ENCODE measurements at regions of chr11 and their contacts with region 1.

Region 1: GRCh38 chr11:1572197-1573076 is at the start of gene DUSP8:
- DNase-seq: peak; percentile 96
- ATAC-seq: peak; percentile 64
- H3K4me3 Mint-ChIP-seq: peak within 1 kb of the TSS; percentile 51
- H3K27ac Mint-ChIP-seq: no peak within 1 kb of the TSS
- H3K4me1 Mint-ChIP-seq: peaks cover 9% of the 10 kb centered on the region
- H3K27me3 Mint-ChIP-seq: peaks cover 2% of the 10 kb centered on the region
- total RNA-seq, gene DUSP8: 1.3 to 2.8 TPM

Region 2: GRCh38 chr11:842370-843002 is 730.0 kb before region 1 on chr11 and contains the starts of genes POLR2L and TSPAN4:
- CTCF ChIA-PET with region 1: no interaction called
- POLR2A ChIA-PET with region 1: no interaction called
- intact Hi-C with region 1: loop called in 1 of 2 experiments (anchors 1 kb)
- DNase-seq: peak; percentile 94
- ATAC-seq: peak; percentile 80
- H3K4me3 Mint-ChIP-seq: peak within 1 kb of the TSS; percentile 84
- H3K27ac Mint-ChIP-seq: peak within 1 kb of the TSS; percentile 87
- H3K4me1 Mint-ChIP-seq: peaks cover 22% of the 10 kb centered on the region
- H3K27me3 Mint-ChIP-seq: peaks cover 4% of the 10 kb centered on the region
- total RNA-seq, gene POLR2L: 74.6 to 79.4 TPM
- total RNA-seq, gene TSPAN4: 5.2 to 6.0 TPM

Region 3: DNA sequence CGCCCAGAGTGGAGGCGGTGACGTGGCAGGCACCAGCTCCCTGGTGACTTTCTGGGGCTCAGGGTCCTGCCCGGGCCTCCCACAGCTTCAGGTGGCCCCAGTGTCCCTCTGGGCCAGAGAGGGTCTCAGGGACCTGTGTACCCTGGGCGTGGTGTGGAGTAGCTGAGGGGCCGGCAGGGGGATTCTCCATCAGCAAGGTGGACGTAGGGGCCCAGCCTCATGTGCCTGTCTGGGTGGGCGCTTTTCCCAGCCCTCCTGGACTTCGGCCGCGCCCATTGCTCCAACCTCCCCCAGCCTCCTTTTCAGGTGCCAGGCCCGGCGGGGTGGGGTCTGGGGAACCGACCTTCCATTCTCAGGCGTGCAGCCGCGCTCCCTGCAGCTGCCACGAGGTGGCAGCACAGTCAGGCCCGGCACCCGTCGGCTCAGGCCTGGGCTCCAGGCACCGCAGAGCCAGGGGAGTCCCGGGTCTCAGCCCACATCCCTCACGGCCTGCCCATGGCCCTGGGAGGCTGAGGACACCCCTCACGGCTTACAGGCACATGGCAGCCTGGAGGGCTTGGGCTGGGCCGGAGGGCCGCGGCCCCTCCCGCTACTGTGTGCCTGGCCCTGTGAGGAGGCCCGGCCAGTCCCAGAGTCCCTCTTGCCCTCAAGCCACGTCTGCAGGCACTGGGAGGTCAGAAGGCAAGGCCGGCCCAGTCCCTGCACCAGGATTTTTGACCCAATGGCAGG is 369.5 kb before region 1 on chr11:
- CTCF ChIA-PET with region 1: interaction called, 3 read pairs
- POLR2A ChIA-PET with region 1: no interaction called
- intact Hi-C with region 1: loop called (anchors 1 to 2 kb)
- DNase-seq: peak; percentile 82
- ATAC-seq: peak; percentile 85
- H3K4me3 Mint-ChIP-seq: no peak overlapping the region
- H3K27ac Mint-ChIP-seq: no peak overlapping the region
- H3K4me1 Mint-ChIP-seq: no peaks in the 10 kb centered on the region
- H3K27me3 Mint-ChIP-seq: no peaks in the 10 kb centered on the region

Region 4: DNA sequence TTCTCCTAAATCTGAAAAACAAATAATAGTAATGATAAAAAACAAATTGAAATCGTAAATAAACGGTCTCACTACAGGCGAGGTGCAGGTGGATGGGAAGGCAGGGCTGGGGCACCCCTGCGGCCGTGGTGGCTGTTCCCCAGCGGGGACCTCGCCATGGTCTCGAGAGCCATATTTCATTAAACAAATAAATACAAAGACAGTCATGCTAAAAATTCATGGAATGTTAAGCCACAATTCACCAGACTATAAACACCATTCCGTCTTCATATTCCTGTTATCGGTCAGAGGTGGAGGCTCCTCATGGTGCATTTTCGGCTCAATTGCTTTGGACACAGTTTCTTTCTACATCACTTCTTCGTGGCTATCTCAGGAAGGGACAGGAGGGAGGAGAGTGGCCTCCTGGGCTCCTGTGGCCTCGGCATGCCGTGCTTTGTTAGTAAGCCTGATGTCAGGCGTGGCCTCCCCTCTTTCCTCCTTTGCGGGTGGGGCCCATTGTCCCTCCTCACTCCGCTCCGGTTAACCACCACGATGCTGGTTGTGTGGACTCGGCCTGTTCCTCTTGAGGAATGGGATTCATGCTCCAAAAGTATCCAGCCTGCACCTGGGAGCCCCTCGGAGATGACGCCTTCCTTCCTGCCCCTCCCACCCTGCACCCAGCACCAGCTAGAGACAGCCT is 198.8 kb before region 1 on chr11:
- CTCF ChIA-PET with region 1: no interaction called
- POLR2A ChIA-PET with region 1: no interaction called
- intact Hi-C with region 1: no loop called
- DNase-seq: no peak
- ATAC-seq: no peak
- H3K4me3 Mint-ChIP-seq: no peak overlapping the region
- H3K27ac Mint-ChIP-seq: no peak overlapping the region
- H3K4me1 Mint-ChIP-seq: no peaks in the 10 kb centered on the region
- H3K27me3 Mint-ChIP-seq: no peaks in the 10 kb centered on the region

Region 5: GRCh38 chr11:1389103-1389931 is 183.1 kb before region 1 on chr11:
- CTCF ChIA-PET with region 1: interaction called, 3 read pairs
- POLR2A ChIA-PET with region 1: no interaction called
- intact Hi-C with region 1: loop called in 1 of 2 experiments (anchors 1 kb)
- DNase-seq: peak; percentile 99
- ATAC-seq: peak; percentile 99
- H3K4me3 Mint-ChIP-seq: peak overlapping the region; percentile 53
- H3K27ac Mint-ChIP-seq: no peak overlapping the region
- H3K4me1 Mint-ChIP-seq: peaks cover 9% of the 10 kb centered on the region
- H3K27me3 Mint-ChIP-seq: peaks cover 25% of the 10 kb centered on the region

Region 6: DNA sequence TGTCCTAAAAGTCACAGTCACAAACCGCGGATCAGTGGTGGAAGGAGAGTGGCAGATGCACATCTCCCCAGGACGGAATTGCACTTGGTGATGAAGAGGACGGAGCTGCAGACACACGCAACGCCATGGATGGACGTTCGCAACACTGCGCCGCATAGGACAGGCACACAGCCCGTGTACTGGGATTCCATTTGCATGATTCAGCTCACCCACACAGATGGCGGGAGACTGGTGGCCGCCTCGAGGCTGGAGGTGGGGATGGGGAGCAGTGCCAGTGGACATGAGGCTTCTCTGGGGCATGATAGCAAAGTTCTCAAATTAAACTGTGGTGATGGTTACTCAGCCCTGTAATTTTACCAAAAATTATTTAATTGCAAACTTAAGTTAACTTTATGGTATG is 37.8 kb before region 1 on chr11:
- CTCF ChIA-PET with region 1: interaction called, 7 read pairs
- POLR2A ChIA-PET with region 1: no interaction called
- intact Hi-C with region 1: loop called in 1 of 2 experiments (anchors 5 kb)
- DNase-seq: no peak
- ATAC-seq: no peak
- H3K4me3 Mint-ChIP-seq: no peak overlapping the region
- H3K27ac Mint-ChIP-seq: no peak overlapping the region
- H3K4me1 Mint-ChIP-seq: peaks cover 32% of the 10 kb centered on the region
- H3K27me3 Mint-ChIP-seq: no peaks in the 10 kb centered on the region

Region 7: DNA sequence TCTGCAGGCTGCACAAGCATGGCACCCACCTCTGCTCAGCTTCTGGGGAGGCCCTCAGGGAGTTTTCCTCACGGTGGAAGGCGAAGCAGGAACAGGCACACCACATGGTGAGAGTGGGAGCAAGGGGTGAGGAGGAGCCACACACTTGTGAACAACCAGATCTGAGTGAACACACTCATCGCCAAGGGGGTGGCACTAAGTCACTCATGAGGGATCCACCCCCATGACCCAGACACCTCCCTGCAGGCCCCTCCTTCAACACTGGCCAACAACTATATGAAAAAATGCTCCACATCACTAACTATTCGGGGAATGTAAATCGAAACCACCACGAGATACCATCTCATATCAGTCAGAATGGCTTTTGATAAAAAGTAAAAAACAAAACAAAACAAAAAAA is 26.4 kb after region 1 on chr11:
- CTCF ChIA-PET with region 1: interaction called, 16 read pairs
- POLR2A ChIA-PET with region 1: no interaction called
- intact Hi-C with region 1: no loop called
- DNase-seq: no peak
- ATAC-seq: peak; percentile 42
- H3K4me3 Mint-ChIP-seq: no peak overlapping the region
- H3K27ac Mint-ChIP-seq: no peak overlapping the region
- H3K4me1 Mint-ChIP-seq: peaks cover 5% of the 10 kb centered on the region
- H3K27me3 Mint-ChIP-seq: peaks cover 39% of the 10 kb centered on the region

Region 8: GRCh38 chr11:2142762-2143202 is 570.3 kb after region 1 on chr11:
- CTCF ChIA-PET with region 1: no interaction called
- POLR2A ChIA-PET with region 1: no interaction called
- intact Hi-C with region 1: loop called in 1 of 2 experiments (anchors 5 kb)
- DNase-seq: peak; percentile 71
- ATAC-seq: peak; percentile 96
- H3K4me3 Mint-ChIP-seq: peak overlapping the region; percentile 55
- H3K27ac Mint-ChIP-seq: no peak overlapping the region
- H3K4me1 Mint-ChIP-seq: peaks cover 31% of the 10 kb centered on the region
- H3K27me3 Mint-ChIP-seq: peaks cover 58% of the 10 kb centered on the region